ENCODE measurements at regions of chrX and their contacts with region 1.

Region 1: GRCh38 chrX:46686003-46686645 is 72.8 kb downstream of the SLC9A7 start:
- DNase-seq: peak; percentile 52
- ATAC-seq: peak; percentile 74
- H3K4me3 Mint-ChIP-seq: no peak overlapping the region
- H3K27ac Mint-ChIP-seq: peak overlapping the region; percentile 31
- H3K4me1 Mint-ChIP-seq: peaks cover 18% of the 10 kb centered on the region
- H3K27me3 Mint-ChIP-seq: no peaks in the 10 kb centered on the region

Region 2: GRCh38 chrX:46444011-46444410 is 242.1 kb before region 1 on chrX:
- CTCF ChIA-PET with region 1: no interaction called
- POLR2A ChIA-PET with region 1: no interaction called
- intact Hi-C with region 1: no loop called
- DNase-seq: peak; percentile 30
- ATAC-seq: no peak
- H3K4me3 Mint-ChIP-seq: no peak overlapping the region
- H3K27ac Mint-ChIP-seq: no peak overlapping the region
- H3K4me1 Mint-ChIP-seq: peaks cover 20% of the 10 kb centered on the region
- H3K27me3 Mint-ChIP-seq: no peaks in the 10 kb centered on the region

Region 3: GRCh38 chrX:46653482-46653881 is 32.6 kb before region 1 on chrX:
- CTCF ChIA-PET with region 1: interaction called, 3 read pairs
- POLR2A ChIA-PET with region 1: no interaction called
- intact Hi-C with region 1: loop called in 1 of 2 experiments (anchors 5 kb)
- DNase-seq: peak; percentile 36
- ATAC-seq: no peak
- H3K4me3 Mint-ChIP-seq: no peak overlapping the region
- H3K27ac Mint-ChIP-seq: no peak overlapping the region
- H3K4me1 Mint-ChIP-seq: peaks cover 5% of the 10 kb centered on the region
- H3K27me3 Mint-ChIP-seq: no peaks in the 10 kb centered on the region